Natural killer cell (primary cell): ENCODE measurements at regions of chr1 and their contacts with region 1.

Region 1: DNA sequence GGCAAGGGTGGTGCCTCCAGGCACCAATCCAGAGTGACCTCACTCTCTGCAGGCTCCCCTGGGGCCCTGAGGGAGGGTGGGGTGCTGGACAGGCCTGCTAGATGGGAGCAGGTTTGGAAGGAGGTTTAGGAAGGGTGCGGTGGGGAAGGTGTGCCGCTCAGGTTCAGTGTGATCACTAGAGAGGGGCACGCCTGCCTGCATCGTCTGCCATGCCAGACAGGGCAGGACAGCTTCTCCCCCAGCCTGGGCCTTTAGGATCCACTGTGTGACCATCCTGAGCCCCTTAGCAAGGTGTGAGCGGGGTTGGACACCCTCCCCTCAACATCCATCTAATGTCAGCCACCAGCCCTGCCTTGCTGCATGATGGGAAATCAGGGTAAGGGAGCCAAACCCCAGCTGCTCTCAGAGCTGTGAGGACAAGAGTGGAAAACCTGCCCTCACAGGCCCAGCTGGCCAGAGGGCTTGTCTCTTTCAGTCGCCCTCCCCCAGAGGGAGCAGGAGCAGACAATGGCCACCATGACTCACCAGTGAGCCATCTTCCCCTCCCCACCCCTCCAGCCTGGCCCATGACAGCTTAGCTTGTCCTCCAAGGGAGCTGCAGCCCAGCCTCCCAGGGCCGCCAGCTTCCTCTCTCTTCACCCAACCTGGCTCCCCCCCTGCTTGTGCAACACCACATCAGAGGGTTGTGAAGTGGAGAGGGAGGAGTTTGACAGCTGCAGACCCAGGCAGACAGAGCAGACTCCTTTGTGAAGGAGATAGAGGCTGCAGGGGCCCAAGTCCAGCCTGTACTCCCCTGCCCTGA is 37.0 kb downstream of the NUAK2 start:
- DNase-seq: peak; percentile 81 to 94
- ATAC-seq: peak; percentile 63 to 77 (median 66)
- H3K4me3 ChIP-seq: peak overlapping the region; percentile 26
- H3K4me3 Mint-ChIP-seq: peak overlapping the region; percentile 91
- H3K27ac ChIP-seq: peak overlapping the region; percentile 82
- H3K27ac Mint-ChIP-seq: peak overlapping the region; percentile 83 to 99
- H3K4me1 ChIP-seq: peaks cover 83% of the 10 kb centered on the region
- H3K4me1 Mint-ChIP-seq: peaks cover 73 to 82% of the 10 kb centered on the region in 2 donors
- H3K27me3 ChIP-seq: no peaks in the 10 kb centered on the region
- H3K27me3 Mint-ChIP-seq: no peaks in the 10 kb centered on the region
- CTCF ChIP-seq: no peak

Region 2: GRCh38 chr1:205258716-205259115 is 25.8 kb before region 1 on chr1:
- intact Hi-C with region 1: no loop called
- DNase-seq: no peak
- ATAC-seq: no peak
- H3K4me3 ChIP-seq: no peak overlapping the region
- H3K4me3 Mint-ChIP-seq: no peak overlapping the region
- H3K27ac ChIP-seq: no peak overlapping the region
- H3K27ac Mint-ChIP-seq: no peak overlapping the region
- H3K4me1 ChIP-seq: peaks cover 11% of the 10 kb centered on the region
- H3K4me1 Mint-ChIP-seq: peaks cover 7 to 18% of the 10 kb centered on the region in 2 donors
- H3K27me3 ChIP-seq: peaks cover 3% of the 10 kb centered on the region
- H3K27me3 Mint-ChIP-seq: peaks cover 7 to 11% of the 10 kb centered on the region in 2 donors
- CTCF ChIP-seq: no peak

Region 3: GRCh38 chr1:205273551-205273982 is 11.0 kb before region 1 on chr1:
- intact Hi-C with region 1: loop called (anchors 1 kb)
- DNase-seq: peak; percentile 83 to 92
- ATAC-seq: peak; percentile 91 to 99 (median 98)
- H3K4me3 ChIP-seq: no peak overlapping the region
- H3K4me3 Mint-ChIP-seq: peak overlapping the region; percentile 37
- H3K27ac ChIP-seq: no peak overlapping the region
- H3K27ac Mint-ChIP-seq: no peak overlapping the region
- H3K4me1 ChIP-seq: peaks cover 37% of the 10 kb centered on the region
- H3K4me1 Mint-ChIP-seq: peaks cover 14 to 18% of the 10 kb centered on the region in 2 donors
- H3K27me3 ChIP-seq: no peaks in the 10 kb centered on the region
- H3K27me3 Mint-ChIP-seq: peaks cover 0 to 6% of the 10 kb centered on the region in 2 donors
- CTCF ChIP-seq: peak; percentile 99

Region 4: GRCh38 chr1:205321164-205321958 is 36.8 kb after region 1 on chr1 and contains the start of gene NUAK2:
- intact Hi-C with region 1: loop called (anchors 1 kb)
- DNase-seq: peak; percentile 79 to 91
- ATAC-seq: peak; percentile 83 to 92 (median 88)
- H3K4me3 ChIP-seq: peak within 1 kb of the TSS; percentile 98
- H3K4me3 Mint-ChIP-seq: peak within 1 kb of the TSS; percentile 98
- H3K27ac ChIP-seq: peak within 1 kb of the TSS; percentile 70
- H3K27ac Mint-ChIP-seq: peak within 1 kb of the TSS; percentile 94 to 98
- H3K4me1 ChIP-seq: peaks cover 52% of the 10 kb centered on the region
- H3K4me1 Mint-ChIP-seq: peaks cover 65 to 73% of the 10 kb centered on the region in 2 donors
- H3K27me3 ChIP-seq: no peaks in the 10 kb centered on the region
- H3K27me3 Mint-ChIP-seq: peaks cover under 1% of the 10 kb centered on the region in 2 donors
- CTCF ChIP-seq: no peak
- total RNA-seq, gene NUAK2: 17.3 to 21.7 (median 21.5) TPM

Region 5: DNA sequence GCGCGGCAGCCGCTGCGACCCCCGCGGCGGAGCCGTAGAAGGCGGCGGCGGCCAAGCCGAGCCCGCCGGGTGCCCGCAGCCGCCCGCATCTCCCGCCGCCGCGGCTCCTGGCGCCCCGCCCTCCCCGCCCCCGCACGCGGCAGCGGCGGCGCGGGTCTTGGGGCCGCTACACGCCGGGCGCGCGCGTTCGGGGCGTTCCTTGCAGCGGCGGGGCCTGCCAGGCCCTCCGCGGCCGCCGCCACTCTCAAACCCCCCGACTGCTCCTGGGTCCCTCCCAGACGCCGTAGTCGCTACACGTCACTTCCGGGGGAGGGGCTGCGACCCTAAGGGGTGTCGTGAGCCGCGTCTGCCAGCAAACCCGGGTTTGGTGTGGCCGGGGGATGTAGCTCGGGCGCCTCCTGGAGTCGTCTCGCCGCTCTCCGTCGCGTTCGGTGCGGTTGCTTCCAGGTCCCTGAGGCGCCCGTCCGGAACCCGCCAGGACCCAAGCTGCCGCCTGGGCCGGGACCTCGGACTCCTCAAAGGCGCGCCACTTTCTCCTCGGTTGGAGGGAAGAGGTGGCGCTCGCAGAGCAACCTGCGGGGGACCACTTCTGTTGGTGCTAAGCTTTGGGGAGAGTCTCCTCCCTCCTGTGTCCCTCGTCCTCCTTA is 347.3 kb after region 1 on chr1 and contains the start of gene ELK4:
- intact Hi-C with region 1: loop called (anchors 5 kb)
- DNase-seq: peak; percentile 99 to 100
- ATAC-seq: peak; percentile 83 to 93 (median 84)
- H3K4me3 ChIP-seq: peak within 1 kb of the TSS; percentile 74
- H3K4me3 Mint-ChIP-seq: peak within 1 kb of the TSS; percentile 97
- H3K27ac ChIP-seq: peak within 1 kb of the TSS; percentile 97
- H3K27ac Mint-ChIP-seq: peak within 1 kb of the TSS; percentile 97 to 99
- H3K4me1 ChIP-seq: peaks cover 22% of the 10 kb centered on the region
- H3K4me1 Mint-ChIP-seq: peaks cover 31 to 37% of the 10 kb centered on the region in 2 donors
- H3K27me3 ChIP-seq: no peaks in the 10 kb centered on the region
- H3K27me3 Mint-ChIP-seq: peaks cover 0 to 5% of the 10 kb centered on the region in 2 donors
- CTCF ChIP-seq: peak; percentile 75
- total RNA-seq, gene ELK4: 107 to 155 (median 139) TPM